Esophagus muscularis mucosa (tissue), 4 donors: ENCODE measurements at regions of chr4 and their contacts with region 1.

Region 1: GRCh38 chr4:53196882-53197771 is 168.7 kb downstream of the SCFD2 start:
- DNase-seq: no peak
- H3K4me3 ChIP-seq: no peak overlapping the region
- H3K27ac ChIP-seq: no peak overlapping the region
- H3K4me1 ChIP-seq: peaks cover 0 to 5% (median 2%) of the 10 kb centered on the region in 4 donors
- H3K27me3 ChIP-seq: no peaks in the 10 kb centered on the region
- CTCF ChIP-seq: peak; percentile 54 to 70 (median 69)
- EP300 ChIP-seq: no peak
- POLR2A ChIP-seq: no peak

Region 2: GRCh38 chr4:53490965-53491622 is 294.0 kb after region 1 on chr4:
- intact Hi-C with region 1: no loop called
- DNase-seq: no peak
- H3K4me3 ChIP-seq: no peak overlapping the region
- H3K27ac ChIP-seq: peak overlapping the region in 1 of 4 donors; percentile 22
- H3K4me1 ChIP-seq: peaks cover 0 to 3% (median 1%) of the 10 kb centered on the region in 4 donors
- H3K27me3 ChIP-seq: no peaks in the 10 kb centered on the region
- CTCF ChIP-seq: peak; percentile 45 to 65 (median 52)
- EP300 ChIP-seq: no peak
- POLR2A ChIP-seq: no peak

Region 3: DNA sequence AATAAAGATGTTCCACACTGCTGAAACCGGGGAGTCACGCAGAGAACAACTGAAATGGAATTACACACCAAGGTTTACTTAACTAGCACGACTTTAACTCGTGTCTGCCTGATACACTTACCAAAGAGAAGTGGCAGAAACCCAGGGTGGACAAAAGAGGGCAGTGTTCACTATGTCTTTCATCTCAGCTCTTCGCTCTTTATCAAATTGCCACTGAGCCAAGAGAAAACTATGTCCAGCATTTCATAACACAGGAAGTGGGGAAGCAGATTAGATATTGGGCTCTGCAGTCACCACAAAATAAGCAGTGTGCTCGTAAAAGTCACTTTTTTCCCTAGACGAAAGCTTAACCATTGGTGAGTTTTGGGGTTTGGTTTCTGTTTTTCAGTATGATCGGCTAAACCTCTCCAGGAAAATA is 711.5 kb after region 1 on chr4:
- intact Hi-C with region 1: loop called (anchors 5 kb)
- DNase-seq: no peak
- H3K4me3 ChIP-seq: peak overlapping the region in 2 of 4 donors; percentile 4 to 38
- H3K27ac ChIP-seq: peak overlapping the region in 2 of 4 donors; percentile 12 to 30
- H3K4me1 ChIP-seq: peaks cover 15 to 21% (median 18%) of the 10 kb centered on the region in 4 donors
- H3K27me3 ChIP-seq: peaks cover 0 to 73% (median 3%) of the 10 kb centered on the region in 4 donors
- CTCF ChIP-seq: peak; percentile 53 to 58 (median 55)
- EP300 ChIP-seq: no peak
- POLR2A ChIP-seq: no peak

Region 4: GRCh38 chr4:54233277-54233696 is 1036.2 kb after region 1 on chr4:
- intact Hi-C with region 1: loop called (anchors 5 kb)
- DNase-seq: no peak
- H3K4me3 ChIP-seq: peak overlapping the region; percentile 54 to 71 (median 58)
- H3K27ac ChIP-seq: peak overlapping the region; percentile 69 to 75 (median 74)
- H3K4me1 ChIP-seq: peaks cover 39 to 59% (median 53%) of the 10 kb centered on the region in 4 donors
- H3K27me3 ChIP-seq: peaks cover 11 to 90% (median 49%) of the 10 kb centered on the region in 4 donors
- CTCF ChIP-seq: peak; percentile 72 to 78 (median 77)
- EP300 ChIP-seq: no peak
- POLR2A ChIP-seq: no peak